Natural killer cell (primary cell): ENCODE measurements at regions of chr19 and their contacts with region 1.

Region 1: DNA sequence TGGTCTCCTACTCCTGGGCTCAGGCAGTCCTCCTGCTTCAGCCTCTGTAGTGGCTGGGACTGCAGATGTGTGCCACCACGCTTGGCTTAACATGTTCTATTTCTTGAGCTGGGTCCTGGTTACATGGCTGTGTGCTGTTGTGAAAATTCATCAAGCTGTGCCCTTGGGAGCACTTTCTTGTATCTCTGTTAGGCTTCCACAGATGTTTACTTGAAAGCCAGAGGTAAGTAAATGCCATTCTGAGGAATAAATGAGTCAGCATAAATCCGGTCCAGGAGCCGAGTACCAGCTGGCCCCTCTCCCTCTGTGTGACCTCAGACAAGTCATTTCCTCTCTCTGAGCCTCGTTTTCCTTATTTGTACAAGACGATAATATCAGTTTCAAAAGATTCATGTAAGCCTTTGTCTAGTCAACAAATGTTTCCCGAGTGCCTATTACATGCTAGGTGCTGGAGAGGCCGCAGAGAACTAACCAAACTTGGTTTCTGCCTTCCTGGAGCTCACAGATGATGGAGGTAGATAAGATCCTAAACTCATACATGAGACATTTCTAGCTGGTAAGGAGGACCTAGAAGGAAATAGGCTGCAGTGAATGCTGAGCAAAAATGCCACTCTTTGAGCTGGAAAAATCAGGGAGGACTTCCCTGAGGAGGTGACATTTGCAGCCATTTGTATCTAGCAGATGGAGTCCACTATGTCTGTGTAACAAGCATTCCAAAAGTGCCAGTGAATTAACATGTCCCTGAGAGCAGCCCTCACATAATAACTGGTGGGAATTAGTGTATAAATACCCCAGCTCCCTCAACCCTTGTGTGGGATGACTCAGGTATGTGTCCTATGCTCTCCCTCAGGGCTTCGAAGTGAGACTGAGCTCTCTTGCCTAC is 2.7 kb upstream of the RASAL3 start:
- DNase-seq: peak in 1 of 2 donors; percentile 73
- ATAC-seq: peak in 1 of 3 donors; percentile 11
- H3K4me3 ChIP-seq: no peak overlapping the region
- H3K4me3 Mint-ChIP-seq: peak overlapping the region; percentile 89
- H3K27ac ChIP-seq: peak overlapping the region; percentile 57
- H3K27ac Mint-ChIP-seq: peak overlapping the region; percentile 73 to 84
- H3K4me1 ChIP-seq: peaks cover 68% of the 10 kb centered on the region
- H3K4me1 Mint-ChIP-seq: peaks cover 52 to 66% of the 10 kb centered on the region in 2 donors
- H3K27me3 ChIP-seq: no peaks in the 10 kb centered on the region
- H3K27me3 Mint-ChIP-seq: peaks cover 0 to 9% of the 10 kb centered on the region in 2 donors
- CTCF ChIP-seq: no peak

Region 2: GRCh38 chr19:15062036-15062435 is 405.1 kb before region 1 on chr19:
- intact Hi-C with region 1: no loop called
- DNase-seq: no peak
- ATAC-seq: no peak
- H3K4me3 ChIP-seq: no peak overlapping the region
- H3K4me3 Mint-ChIP-seq: no peak overlapping the region
- H3K27ac ChIP-seq: no peak overlapping the region
- H3K27ac Mint-ChIP-seq: no peak overlapping the region
- H3K4me1 ChIP-seq: no peaks in the 10 kb centered on the region
- H3K4me1 Mint-ChIP-seq: no peaks in the 10 kb centered on the region
- H3K27me3 ChIP-seq: no peaks in the 10 kb centered on the region
- H3K27me3 Mint-ChIP-seq: peaks cover 22 to 39% of the 10 kb centered on the region in 2 donors
- CTCF ChIP-seq: no peak

Region 3: DNA sequence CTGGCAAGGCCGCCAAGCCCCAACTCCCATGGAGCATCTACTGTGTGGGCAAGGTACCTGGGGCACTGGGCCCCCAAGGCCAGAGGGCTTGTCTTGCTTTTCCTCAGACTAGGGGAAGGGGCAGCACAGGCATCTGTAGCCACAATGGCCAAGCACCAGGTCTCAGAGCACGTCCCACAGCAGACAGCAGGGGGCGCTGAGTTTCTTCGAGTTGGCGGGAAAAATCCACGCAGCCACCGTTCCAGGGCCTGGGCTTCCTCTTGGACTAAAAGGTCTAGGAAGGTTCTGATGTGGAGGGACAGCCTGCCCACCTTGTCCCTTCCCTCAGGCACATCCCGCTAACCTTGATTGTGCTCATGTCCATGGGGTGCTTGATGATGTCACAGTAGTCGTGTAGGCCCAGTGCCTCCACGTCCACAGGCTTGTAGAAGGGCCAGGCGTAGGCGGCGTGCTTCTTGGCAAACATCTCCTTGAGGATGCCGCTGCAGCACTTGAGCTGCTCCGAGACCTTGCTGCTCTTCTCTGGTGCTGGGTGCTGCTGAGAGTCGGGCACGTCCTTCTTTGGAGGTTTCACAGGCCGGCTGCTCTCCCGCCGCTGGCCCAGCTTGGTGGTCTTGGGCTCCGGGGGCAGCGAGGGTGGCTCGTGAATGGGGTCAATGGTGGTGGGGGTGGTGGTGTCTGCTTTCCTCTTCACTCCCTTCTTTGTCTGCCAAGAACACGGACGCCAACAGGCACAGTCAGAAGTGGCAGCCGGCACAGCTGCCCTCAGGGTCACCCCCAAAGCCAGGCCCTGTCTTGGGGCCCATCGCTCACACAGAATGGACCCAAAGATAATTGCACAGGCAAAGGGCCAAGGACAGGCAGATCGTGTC is 202.8 kb before region 1 on chr19:
- intact Hi-C with region 1: loop called (anchors 10 kb)
- DNase-seq: peak; percentile 70 to 82
- ATAC-seq: peak; percentile 49 to 82 (median 71)
- H3K4me3 ChIP-seq: no peak overlapping the region
- H3K4me3 Mint-ChIP-seq: no peak overlapping the region
- H3K27ac ChIP-seq: no peak overlapping the region
- H3K27ac Mint-ChIP-seq: no peak overlapping the region
- H3K4me1 ChIP-seq: no peaks in the 10 kb centered on the region
- H3K4me1 Mint-ChIP-seq: peaks cover 9 to 27% of the 10 kb centered on the region in 2 donors
- H3K27me3 ChIP-seq: no peaks in the 10 kb centered on the region
- H3K27me3 Mint-ChIP-seq: no peaks in the 10 kb centered on the region
- CTCF ChIP-seq: peak; percentile 76

Region 4: DNA sequence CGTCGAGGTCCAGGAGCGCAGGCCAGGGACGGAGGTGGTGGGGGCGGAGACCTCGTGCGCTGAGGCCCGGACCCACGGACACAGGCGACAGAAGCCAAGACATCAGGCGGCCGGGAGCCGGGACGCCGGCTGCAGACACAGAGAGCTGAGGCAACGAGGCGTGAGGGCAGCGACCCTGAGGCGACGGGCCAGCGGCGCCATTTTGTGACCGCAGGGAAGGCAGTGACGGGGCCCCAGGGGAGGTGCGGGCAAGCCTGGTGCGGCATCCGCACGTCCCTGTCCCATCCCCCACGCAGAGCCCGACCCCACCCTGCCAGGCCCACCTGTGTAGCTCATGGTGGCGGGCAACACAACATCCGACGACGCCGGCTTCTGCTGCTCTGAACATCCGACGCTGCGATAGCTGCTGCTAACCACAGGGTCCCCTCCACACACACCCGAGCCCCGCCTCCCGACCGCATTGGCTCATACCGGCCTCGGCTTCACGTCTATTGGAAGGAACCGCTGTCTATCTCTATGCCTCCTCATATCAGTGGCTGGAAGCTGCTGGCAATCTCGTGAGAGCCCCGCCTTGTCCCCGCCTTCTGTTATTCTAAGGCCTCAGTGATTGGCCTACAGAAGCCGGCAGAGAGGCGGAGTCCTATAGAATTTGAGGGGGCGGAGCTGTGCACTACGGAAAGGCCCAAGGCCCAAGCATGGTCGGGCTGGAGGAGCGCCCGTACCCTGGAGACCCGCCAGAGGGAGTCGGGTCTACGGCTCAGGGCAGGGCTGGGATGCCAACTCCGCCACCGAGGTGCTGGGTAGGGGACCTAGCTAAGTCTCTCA is 48.3 kb before region 1 on chr19 and contains the start of gene AKAP8L:
- intact Hi-C with region 1: loop called (anchors 1 kb)
- DNase-seq: peak; percentile 99
- ATAC-seq: peak; percentile 91 to 98 (median 93)
- H3K4me3 ChIP-seq: peak within 1 kb of the TSS; percentile 86
- H3K4me3 Mint-ChIP-seq: peak within 1 kb of the TSS; percentile 95
- H3K27ac ChIP-seq: peak within 1 kb of the TSS; percentile 50
- H3K27ac Mint-ChIP-seq: peak within 1 kb of the TSS; percentile 91 to 98
- H3K4me1 ChIP-seq: peaks cover 25% of the 10 kb centered on the region
- H3K4me1 Mint-ChIP-seq: peaks cover 42 to 45% of the 10 kb centered on the region in 2 donors
- H3K27me3 ChIP-seq: no peaks in the 10 kb centered on the region
- H3K27me3 Mint-ChIP-seq: no peaks in the 10 kb centered on the region
- CTCF ChIP-seq: peak; percentile 81
- total RNA-seq, gene AKAP8L: 144 to 174 (median 173) TPM

Region 5: DNA sequence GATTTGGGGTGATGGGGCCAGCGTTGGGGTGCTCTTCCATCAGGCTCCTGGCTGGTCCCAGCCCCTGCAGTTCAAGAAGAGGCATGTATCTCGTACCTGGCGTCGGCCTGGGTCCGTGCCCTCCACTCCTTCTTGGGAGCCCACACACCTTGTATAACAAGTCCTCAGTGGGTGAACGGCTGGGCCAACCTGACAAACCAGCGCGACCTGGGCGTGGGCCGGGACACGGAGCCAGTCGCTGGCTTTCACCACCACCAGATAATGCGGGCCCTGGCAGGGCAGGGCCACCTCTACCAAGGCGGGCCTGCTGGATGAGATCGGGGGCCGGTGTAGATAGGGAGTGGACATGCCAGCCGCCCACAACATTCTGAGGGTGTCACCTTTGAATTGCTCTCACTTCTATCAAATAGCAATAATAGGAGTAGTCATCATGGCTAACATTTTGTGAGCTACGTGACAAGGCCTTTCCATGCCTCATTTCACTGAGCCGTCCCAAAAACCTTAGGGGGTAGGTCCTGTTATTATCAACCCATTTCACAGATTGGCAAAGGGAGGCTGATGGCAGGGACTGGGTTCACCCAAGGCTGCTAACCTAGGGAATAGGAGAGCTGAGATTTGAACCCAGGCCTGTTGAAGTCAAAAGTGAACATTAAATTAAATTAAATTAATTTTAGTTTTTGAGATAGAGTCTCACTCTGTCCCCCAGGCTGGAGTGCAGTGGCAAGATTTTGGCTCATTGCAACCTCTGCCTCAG is 44.8 kb after region 1 on chr19:
- intact Hi-C with region 1: loop called (anchors 5 kb)
- DNase-seq: no peak
- ATAC-seq: no peak
- H3K4me3 ChIP-seq: no peak overlapping the region
- H3K4me3 Mint-ChIP-seq: no peak overlapping the region
- H3K27ac ChIP-seq: no peak overlapping the region
- H3K27ac Mint-ChIP-seq: no peak overlapping the region
- H3K4me1 ChIP-seq: peaks cover 35% of the 10 kb centered on the region
- H3K4me1 Mint-ChIP-seq: peaks cover 31 to 36% of the 10 kb centered on the region in 2 donors
- H3K27me3 ChIP-seq: peaks cover 8% of the 10 kb centered on the region
- H3K27me3 Mint-ChIP-seq: peaks cover 8 to 17% of the 10 kb centered on the region in 2 donors
- CTCF ChIP-seq: no peak